Activated B cell treated with CpG ODN at 0.5 μM for 24 hours (primary cell): ENCODE measurements at regions of chr2 and their contacts with region 1.

Region 1: DNA sequence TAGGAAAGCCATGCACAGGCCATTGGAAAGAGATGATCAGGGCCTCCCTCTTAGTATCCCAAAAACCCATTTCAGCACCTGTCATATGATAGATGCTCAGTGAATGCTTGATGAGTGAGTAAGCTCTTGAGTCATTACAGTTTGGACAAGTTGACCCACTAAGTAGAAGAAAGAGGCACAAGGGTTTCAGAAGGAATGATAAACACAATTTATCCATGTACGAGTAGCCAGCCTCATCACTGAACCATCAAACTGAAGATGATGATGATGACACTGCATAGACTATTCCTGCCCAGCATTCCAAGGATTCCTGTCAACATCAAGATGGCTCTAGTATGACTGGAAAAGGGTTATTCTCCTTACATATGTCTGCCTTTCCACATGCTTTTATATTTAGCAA is 596.0 kb downstream of the BCL11A start:
- DNase-seq: no peak
- ATAC-seq: no peak
- H3K4me3 Mint-ChIP-seq: no peak overlapping the region
- H3K27ac Mint-ChIP-seq: no peak overlapping the region
- H3K4me1 Mint-ChIP-seq: peaks cover 18% of the 10 kb centered on the region
- H3K27me3 Mint-ChIP-seq: no peaks in the 10 kb centered on the region
- CTCF ChIP-seq: no peak

Region 2: DNA sequence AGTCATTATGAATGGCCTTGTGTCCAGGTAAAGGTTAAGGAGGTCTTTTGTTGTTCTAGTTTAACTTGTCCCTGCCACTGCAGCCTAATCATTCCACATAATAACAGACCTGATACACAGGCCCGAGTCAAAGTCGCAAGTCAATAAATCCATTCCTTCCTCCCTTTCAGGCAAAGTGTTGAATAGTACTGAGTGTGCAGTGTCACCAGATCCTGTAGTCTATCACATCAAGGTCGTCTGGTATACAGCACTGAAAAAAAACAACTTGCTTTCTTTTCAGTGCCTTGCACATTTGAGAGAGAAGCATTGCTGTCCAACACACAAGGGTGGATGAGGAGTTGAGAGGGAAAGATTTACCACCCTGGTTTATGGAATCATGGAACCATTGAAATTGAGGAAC is 10.3 kb before region 1 on chr2:
- CTCF ChIA-PET with region 1: no interaction called
- POLR2A ChIA-PET with region 1: no interaction called
- intact Hi-C with region 1: no loop called
- DNase-seq: no peak
- ATAC-seq: no peak
- H3K4me3 Mint-ChIP-seq: no peak overlapping the region
- H3K27ac Mint-ChIP-seq: no peak overlapping the region
- H3K4me1 Mint-ChIP-seq: no peaks in the 10 kb centered on the region
- H3K27me3 Mint-ChIP-seq: no peaks in the 10 kb centered on the region
- CTCF ChIP-seq: no peak

Region 3: GRCh38 chr2:60504049-60504448 is 546.5 kb after region 1 on chr2:
- CTCF ChIA-PET with region 1: interaction called, 3 read pairs
- POLR2A ChIA-PET with region 1: interaction called, 10 read pairs
- intact Hi-C with region 1: no loop called
- DNase-seq: no peak
- ATAC-seq: peak; percentile 43
- H3K4me3 Mint-ChIP-seq: peak overlapping the region; percentile 58
- H3K27ac Mint-ChIP-seq: peak overlapping the region; percentile 90
- H3K4me1 Mint-ChIP-seq: peaks cover 98% of the 10 kb centered on the region
- H3K27me3 Mint-ChIP-seq: no peaks in the 10 kb centered on the region
- CTCF ChIP-seq: no peak